CD4-positive, alpha-beta memory T cell (primary cell): ENCODE measurements at regions of chr5 and their contacts with region 1.

Region 1: DNA sequence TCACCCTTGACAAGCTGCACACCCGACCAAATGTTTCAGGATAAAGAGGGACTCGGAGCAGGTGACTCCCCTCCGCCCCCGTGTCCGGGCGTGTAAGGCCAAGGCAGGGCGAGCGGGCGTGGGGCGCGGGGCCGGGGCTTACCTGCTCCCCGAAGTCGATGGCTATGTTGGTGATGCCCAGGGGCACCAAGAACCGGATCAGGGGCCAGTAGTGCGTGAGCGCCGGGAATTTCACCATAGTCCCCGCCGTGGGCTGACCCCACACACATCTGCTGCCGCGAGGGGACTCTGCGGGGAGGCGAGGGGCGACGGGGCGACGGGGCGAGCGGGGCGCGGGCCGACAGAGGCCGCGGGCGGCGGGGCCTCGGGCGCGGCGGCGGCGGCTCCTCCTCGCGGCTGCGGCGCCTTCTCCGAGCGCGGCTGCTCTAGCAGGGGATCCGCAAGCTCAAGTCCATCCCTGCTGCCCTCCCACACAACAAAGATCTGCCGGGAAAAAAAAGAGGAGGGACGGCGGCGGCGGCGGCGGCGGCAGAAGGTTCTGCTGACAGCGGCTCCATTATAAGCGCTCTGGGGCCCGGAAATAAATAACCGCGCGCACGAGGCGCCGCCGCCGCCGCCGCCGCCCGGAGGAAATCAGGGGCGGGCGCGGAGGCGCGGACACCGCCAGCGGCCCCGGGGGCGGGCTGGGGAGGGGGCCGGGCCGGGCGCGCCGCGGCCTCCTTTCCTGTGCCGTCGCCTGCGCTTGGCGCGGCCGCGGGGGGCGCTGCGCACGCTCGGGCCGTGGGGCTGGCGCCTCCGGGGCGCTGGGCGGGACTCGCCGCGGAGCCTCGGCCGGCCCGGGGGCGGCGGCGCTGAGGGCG is at the start of gene ANKH:
- DNase-seq: peak; percentile 77 to 89 (median 87)
- H3K4me3 ChIP-seq: peak within 1 kb of the TSS; percentile 74 to 76
- H3K4me3 Mint-ChIP-seq: peak within 1 kb of the TSS; percentile 94 to 99 (median 98)
- H3K27ac ChIP-seq: peak within 1 kb of the TSS; percentile 67
- H3K27ac Mint-ChIP-seq: peak within 1 kb of the TSS; percentile 96 to 98 (median 97)
- H3K4me1 ChIP-seq: peaks cover 22% of the 10 kb centered on the region
- H3K4me1 Mint-ChIP-seq: peaks cover 29 to 46% (median 33%) of the 10 kb centered on the region in 4 donors
- H3K27me3 ChIP-seq: no peaks in the 10 kb centered on the region
- H3K27me3 Mint-ChIP-seq: no peaks in the 10 kb centered on the region
- total RNA-seq, gene ANKH: 161 to 165 TPM

Region 2: DNA sequence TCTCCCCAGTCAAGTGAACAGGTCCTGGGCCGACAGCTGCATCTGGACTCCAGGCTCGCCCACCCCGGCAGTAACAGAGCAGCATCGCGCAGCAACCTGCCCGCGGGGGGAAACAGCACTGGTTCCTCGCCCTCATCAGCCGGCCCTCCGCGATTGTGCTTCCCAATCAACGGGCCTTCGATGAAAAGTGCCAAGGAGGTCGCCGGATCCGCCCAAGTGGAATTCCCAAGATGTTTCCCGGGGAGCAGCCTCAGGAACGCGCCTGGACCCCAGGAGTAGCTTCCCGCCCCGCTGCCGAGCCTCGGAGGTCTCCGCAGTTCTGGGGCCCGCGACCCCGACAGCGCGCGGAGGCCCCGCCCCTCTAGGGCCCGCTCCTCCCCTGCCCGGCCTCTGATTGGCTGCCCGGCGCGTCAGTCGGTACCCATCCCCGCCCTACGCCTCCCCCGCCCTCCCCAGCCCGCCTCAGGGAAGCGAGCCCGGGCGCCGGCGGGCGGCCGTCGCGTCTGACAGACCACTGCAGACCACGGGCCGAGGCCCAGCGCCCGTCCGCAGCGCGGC is 290.0 kb before region 1 on chr5 and contains the start of gene OTULINL:
- CTCF ChIA-PET with region 1: no interaction called
- POLR2A ChIA-PET with region 1: interaction called, 4 read pairs
- intact Hi-C with region 1: loop called (anchors 2 kb)
- DNase-seq: peak; percentile 80 to 87 (median 83)
- H3K4me3 ChIP-seq: peak within 1 kb of the TSS; percentile 34 to 67
- H3K4me3 Mint-ChIP-seq: peak within 1 kb of the TSS; percentile 83 to 91 (median 90)
- H3K27ac ChIP-seq: peak within 1 kb of the TSS; percentile 67
- H3K27ac Mint-ChIP-seq: peak within 1 kb of the TSS; percentile 84 to 96 (median 91)
- H3K4me1 ChIP-seq: peaks cover 29% of the 10 kb centered on the region
- H3K4me1 Mint-ChIP-seq: peaks cover 15 to 44% (median 30%) of the 10 kb centered on the region in 4 donors
- H3K27me3 ChIP-seq: no peaks in the 10 kb centered on the region
- H3K27me3 Mint-ChIP-seq: no peaks in the 10 kb centered on the region
- total RNA-seq, gene OTULINL: 24.7 to 26.3 TPM

Region 3: DNA sequence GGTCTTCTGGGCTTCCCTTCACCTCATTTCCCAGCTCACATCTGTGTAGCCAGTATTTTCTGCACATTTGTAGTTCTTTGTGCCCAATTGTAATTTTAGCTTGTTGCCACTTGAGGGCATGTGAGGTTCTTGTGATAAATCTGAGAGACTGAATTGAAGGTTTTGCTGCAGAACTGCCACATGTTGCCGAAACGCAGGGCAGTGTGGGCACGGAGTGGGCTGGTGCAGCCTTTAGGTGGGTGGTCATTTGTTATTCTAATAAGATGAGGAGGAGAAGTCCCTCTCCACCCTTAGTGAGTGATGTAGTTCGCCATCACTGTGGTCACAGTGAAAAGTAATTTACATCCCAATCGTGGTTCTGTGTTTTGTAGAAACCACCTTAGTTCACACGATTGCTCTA is 185.7 kb before region 1 on chr5:
- CTCF ChIA-PET with region 1: interaction called, 8 read pairs
- POLR2A ChIA-PET with region 1: interaction called, 3 read pairs
- intact Hi-C with region 1: loop called (anchors 1 kb)
- DNase-seq: peak; percentile 52 to 63 (median 57)
- H3K4me3 ChIP-seq: no peak overlapping the region
- H3K4me3 Mint-ChIP-seq: peak overlapping the region; percentile 38 to 86 (median 67)
- H3K27ac ChIP-seq: no peak overlapping the region
- H3K27ac Mint-ChIP-seq: peak overlapping the region in 6 of 7 donors; percentile 8 to 97 (median 64)
- H3K4me1 ChIP-seq: peaks cover 7% of the 10 kb centered on the region
- H3K4me1 Mint-ChIP-seq: peaks cover 7 to 12% (median 11%) of the 10 kb centered on the region in 4 donors
- H3K27me3 ChIP-seq: no peaks in the 10 kb centered on the region
- H3K27me3 Mint-ChIP-seq: no peaks in the 10 kb centered on the region

Region 4: DNA sequence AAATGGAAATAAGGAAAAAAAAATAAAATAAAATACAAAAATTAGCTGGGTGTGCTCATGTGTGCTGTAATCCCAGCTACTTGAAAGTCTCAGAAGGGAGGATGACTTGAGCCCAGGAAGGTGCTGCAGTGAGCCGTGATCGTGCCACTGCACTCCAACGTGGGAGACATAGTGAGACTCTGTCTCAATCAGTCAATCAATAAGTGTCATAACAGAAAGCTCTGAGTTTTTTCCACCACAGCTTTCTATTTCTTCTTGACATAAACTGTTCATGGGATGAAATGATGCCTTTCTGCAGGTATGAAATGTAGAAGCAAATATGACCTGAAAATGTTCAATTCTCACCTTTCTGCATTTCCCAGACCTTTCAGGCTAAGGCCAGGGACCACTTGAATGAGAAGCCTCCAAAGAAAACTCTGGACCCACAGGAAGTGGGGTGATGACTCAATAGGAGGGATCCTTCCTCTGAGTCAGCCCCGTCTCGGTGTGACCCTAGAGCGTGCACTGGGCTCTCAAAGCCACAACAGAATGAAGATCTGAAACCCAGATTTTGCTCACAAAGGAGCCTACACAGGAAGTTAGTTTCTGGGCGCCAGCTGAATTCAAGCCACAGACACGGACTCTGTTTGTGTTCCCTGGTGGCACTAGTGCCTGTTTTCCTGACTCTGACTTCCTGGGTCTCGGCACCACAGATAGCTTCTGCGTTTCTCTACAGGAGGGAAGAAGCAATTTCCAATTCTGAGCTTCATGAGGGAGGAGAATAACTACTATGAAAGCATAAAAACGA is 61.9 kb before region 1 on chr5:
- CTCF ChIA-PET with region 1: interaction called, 6 read pairs
- POLR2A ChIA-PET with region 1: interaction called, 26 read pairs
- intact Hi-C with region 1: loop called (anchors 1 kb)
- DNase-seq: peak; percentile 58 to 89 (median 70)
- H3K4me3 ChIP-seq: peak overlapping the region in 1 of 2 donors; percentile 19
- H3K4me3 Mint-ChIP-seq: peak overlapping the region; percentile 79 to 91 (median 84)
- H3K27ac ChIP-seq: peak overlapping the region; percentile 52
- H3K27ac Mint-ChIP-seq: peak overlapping the region; percentile 63 to 97 (median 93)
- H3K4me1 ChIP-seq: peaks cover 50% of the 10 kb centered on the region
- H3K4me1 Mint-ChIP-seq: peaks cover 50 to 78% (median 57%) of the 10 kb centered on the region in 4 donors
- H3K27me3 ChIP-seq: no peaks in the 10 kb centered on the region
- H3K27me3 Mint-ChIP-seq: no peaks in the 10 kb centered on the region

Region 5: GRCh38 chr5:14996997-14997396 is 125.6 kb after region 1 on chr5:
- CTCF ChIA-PET with region 1: interaction called, 6 read pairs
- POLR2A ChIA-PET with region 1: interaction called, 12 read pairs
- intact Hi-C with region 1: loop called (anchors 2 kb)
- DNase-seq: no peak
- H3K4me3 ChIP-seq: no peak overlapping the region
- H3K4me3 Mint-ChIP-seq: no peak overlapping the region
- H3K27ac ChIP-seq: no peak overlapping the region
- H3K27ac Mint-ChIP-seq: no peak overlapping the region
- H3K4me1 ChIP-seq: peaks cover 7% of the 10 kb centered on the region
- H3K4me1 Mint-ChIP-seq: peaks cover 5 to 15% (median 9%) of the 10 kb centered on the region in 4 donors
- H3K27me3 ChIP-seq: no peaks in the 10 kb centered on the region
- H3K27me3 Mint-ChIP-seq: peaks cover 3 to 7% of the 10 kb centered on the region in 2 donors

Region 6: DNA sequence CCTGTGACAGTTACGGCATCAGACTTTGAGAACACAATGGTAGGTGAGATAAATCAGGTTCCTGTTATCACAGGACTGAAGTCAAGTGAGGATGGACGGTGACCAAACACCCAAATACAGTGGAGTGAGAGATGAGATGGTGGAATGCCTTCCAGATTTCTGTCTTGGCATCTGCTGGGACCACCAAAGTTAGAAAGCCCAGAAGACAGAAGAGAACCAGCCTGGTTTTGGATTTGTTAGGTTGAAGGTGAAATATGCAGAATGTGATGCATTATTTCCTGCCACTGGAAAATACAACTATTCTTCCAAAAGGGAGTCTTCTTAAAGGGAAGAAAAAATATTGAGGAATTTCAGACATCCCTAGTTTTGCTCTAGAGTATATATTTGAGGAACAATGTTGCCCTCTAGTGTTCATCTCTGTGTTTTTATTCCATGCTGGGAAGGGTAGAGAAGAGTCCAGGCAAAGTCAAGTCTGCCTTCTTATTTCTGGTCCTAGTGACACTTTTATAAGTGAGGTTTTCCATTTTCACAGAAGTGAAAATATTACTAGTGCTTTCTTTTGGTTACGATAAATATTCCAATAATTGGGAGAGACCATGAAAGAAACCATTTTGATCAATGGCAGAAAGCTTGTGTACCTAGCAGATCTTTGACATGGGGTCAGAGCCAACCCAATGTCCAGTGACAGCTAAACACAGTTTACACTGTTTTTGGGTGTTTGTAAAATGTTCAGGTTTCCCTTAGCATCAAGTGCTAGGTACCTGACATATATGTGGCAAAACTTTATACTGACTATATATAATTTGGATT is 142.4 kb after region 1 on chr5:
- CTCF ChIA-PET with region 1: no interaction called
- POLR2A ChIA-PET with region 1: no interaction called
- intact Hi-C with region 1: no loop called
- DNase-seq: peak in 4 of 5 donors; percentile 19 to 36 (median 28)
- H3K4me3 ChIP-seq: no peak overlapping the region
- H3K4me3 Mint-ChIP-seq: no peak overlapping the region
- H3K27ac ChIP-seq: no peak overlapping the region
- H3K27ac Mint-ChIP-seq: no peak overlapping the region
- H3K4me1 ChIP-seq: no peaks in the 10 kb centered on the region
- H3K4me1 Mint-ChIP-seq: no peaks in the 10 kb centered on the region
- H3K27me3 ChIP-seq: no peaks in the 10 kb centered on the region
- H3K27me3 Mint-ChIP-seq: peaks cover 0 to under 1% of the 10 kb centered on the region in 2 donors

Region 7: DNA sequence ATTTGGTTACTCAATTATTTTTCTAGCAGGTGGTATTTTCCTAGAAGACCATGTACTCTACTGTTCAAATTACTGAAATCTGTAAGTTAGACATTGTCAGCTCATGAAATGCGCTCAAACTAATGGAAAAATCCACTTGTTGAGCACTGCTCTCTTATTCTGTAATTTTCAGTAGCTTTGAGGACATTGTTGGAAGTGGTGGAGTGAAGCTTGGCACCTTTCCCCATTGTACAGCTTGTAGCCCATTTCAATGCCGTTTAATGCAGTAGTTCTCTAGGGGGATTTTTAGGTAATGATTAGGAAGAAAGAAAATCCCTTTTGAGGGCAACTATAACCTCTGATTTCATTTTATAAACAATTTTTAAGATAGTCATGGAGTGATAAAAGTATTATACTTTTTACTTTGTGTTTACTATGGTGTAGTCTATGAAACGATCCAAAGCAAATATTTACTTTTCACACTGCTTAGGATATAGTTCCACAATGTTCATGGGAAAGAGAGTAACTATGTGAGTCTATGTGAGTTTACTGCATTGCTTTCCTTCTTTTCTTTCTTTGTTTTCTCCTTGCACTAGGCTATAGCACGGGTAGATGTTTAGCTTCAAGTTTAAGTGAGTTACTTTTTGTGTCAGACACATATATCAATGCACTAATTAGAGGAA is 165.9 kb after region 1 on chr5:
- CTCF ChIA-PET with region 1: no interaction called
- POLR2A ChIA-PET with region 1: no interaction called
- intact Hi-C with region 1: no loop called
- DNase-seq: no peak
- H3K4me3 ChIP-seq: no peak overlapping the region
- H3K4me3 Mint-ChIP-seq: no peak overlapping the region
- H3K27ac ChIP-seq: no peak overlapping the region
- H3K27ac Mint-ChIP-seq: no peak overlapping the region
- H3K4me1 ChIP-seq: no peaks in the 10 kb centered on the region
- H3K4me1 Mint-ChIP-seq: no peaks in the 10 kb centered on the region
- H3K27me3 ChIP-seq: no peaks in the 10 kb centered on the region
- H3K27me3 Mint-ChIP-seq: peaks cover 8 to 12% of the 10 kb centered on the region in 2 donors

Region 8: DNA sequence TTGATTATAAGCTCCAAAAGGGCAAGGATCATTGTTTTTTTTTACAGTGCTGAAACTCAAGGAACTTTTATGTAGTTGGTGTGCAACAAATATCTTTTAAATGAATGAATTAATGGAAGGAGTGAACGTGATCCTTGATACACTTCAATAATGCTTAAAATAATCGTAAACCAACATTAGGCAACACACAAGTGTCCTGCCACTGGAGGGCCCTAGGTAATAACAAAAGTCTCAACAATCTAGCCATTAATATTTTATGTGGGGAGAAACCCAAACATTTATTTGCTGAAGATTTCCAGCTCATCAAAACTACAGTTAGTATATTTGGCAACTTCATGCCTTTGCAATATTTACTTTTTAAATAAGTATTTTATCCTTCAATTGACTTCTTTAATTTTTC is 319.6 kb after region 1 on chr5:
- CTCF ChIA-PET with region 1: no interaction called
- POLR2A ChIA-PET with region 1: no interaction called
- intact Hi-C with region 1: no loop called
- DNase-seq: no peak
- H3K4me3 ChIP-seq: no peak overlapping the region
- H3K4me3 Mint-ChIP-seq: no peak overlapping the region
- H3K27ac ChIP-seq: no peak overlapping the region
- H3K27ac Mint-ChIP-seq: no peak overlapping the region
- H3K4me1 ChIP-seq: no peaks in the 10 kb centered on the region
- H3K4me1 Mint-ChIP-seq: no peaks in the 10 kb centered on the region
- H3K27me3 ChIP-seq: no peaks in the 10 kb centered on the region
- H3K27me3 Mint-ChIP-seq: no peaks in the 10 kb centered on the region